Left ventricle myocardium inferior (tissue), 1 donor: ENCODE measurements at regions of chr13 and their contacts with region 1.

Region 1: GRCh38 chr13:52179925-52180324 is 20.5 kb upstream of the NEK3 start:
- DNase-seq: no peak
- H3K4me3 ChIP-seq: no peak overlapping the region
- H3K27ac ChIP-seq: no peak overlapping the region
- H3K4me1 ChIP-seq: no peaks in the 10 kb centered on the region
- H3K27me3 ChIP-seq: no peaks in the 10 kb centered on the region
- CTCF ChIP-seq: no peak

Region 2: GRCh38 chr13:51988988-51989618 is 190.8 kb before region 1 on chr13:
- intact Hi-C with region 1: no loop called
- DNase-seq: no peak
- H3K4me3 ChIP-seq: no peak overlapping the region
- H3K27ac ChIP-seq: no peak overlapping the region
- H3K4me1 ChIP-seq: no peaks in the 10 kb centered on the region
- H3K27me3 ChIP-seq: no peaks in the 10 kb centered on the region
- CTCF ChIP-seq: no peak

Region 3: GRCh38 chr13:52141297-52141696 is 38.6 kb before region 1 on chr13:
- intact Hi-C with region 1: loop called (anchors 5 kb)
- DNase-seq: no peak
- H3K4me3 ChIP-seq: no peak overlapping the region
- H3K27ac ChIP-seq: no peak overlapping the region
- H3K4me1 ChIP-seq: no peaks in the 10 kb centered on the region
- H3K27me3 ChIP-seq: no peaks in the 10 kb centered on the region
- CTCF ChIP-seq: peak; percentile 15